HEK293 (cell line): ENCODE measurements at regions of chr1 and their contacts with region 1.

Region 1: GRCh38 chr1:201530741-201531531 is 8.0 kb upstream of the NAV1 start:
- H3K4me3 ChIP-seq: no peak overlapping the region
- H3K27ac ChIP-seq: no peak overlapping the region
- H3K4me1 ChIP-seq: peaks cover 4% of the 10 kb centered on the region; the same call in 1 of the 2 replicates
- CTCF ChIP-seq: peak; percentile 87

Region 2: DNA sequence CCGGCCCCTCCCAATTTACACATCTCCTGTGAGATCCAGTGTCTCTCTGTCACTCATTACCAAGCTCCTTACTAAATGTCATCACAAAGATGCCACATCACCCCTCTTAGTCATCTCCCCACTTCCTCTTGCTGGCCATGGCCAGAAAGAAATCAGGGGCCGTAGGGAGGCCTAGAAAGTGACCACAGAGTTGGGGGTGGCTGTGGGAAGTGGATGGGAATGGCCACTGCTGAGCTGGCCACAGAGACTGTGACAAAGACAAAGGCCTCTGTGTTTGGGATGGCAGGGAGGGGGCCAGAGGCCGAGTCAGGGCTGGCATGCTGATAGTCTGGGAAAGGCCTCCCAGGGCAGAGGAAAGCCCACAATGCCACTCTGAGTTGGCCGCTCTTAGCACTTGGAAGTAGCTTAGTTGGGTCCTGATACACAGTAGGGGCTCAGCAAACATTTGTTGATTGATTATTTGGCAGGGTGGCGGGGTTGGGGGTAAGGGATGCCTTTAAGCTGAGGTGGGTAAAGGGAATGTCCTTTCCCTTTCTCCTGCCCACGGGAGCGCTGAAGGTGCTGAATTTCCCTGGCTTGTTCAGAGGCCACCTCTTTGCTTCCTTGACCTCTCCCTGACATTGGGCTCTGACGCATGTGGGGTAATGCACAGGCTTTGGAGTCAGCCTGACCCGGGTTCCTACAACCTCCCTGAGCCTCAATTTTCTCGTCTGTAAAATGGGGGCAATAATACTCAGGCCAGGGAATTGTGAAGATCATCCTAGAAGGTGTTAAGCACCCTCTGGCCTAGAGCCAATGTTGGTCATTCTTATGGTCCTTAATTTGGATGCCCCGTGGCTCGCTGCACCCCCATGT is 21.2 kb after region 1 on chr1:
- CTCF ChIA-PET with region 1: interaction called, 15 read pairs
- POLR2A ChIA-PET with region 1: no interaction called
- H3K4me3 ChIP-seq: no peak overlapping the region
- H3K27ac ChIP-seq: no peak overlapping the region
- H3K4me1 ChIP-seq: no peaks in the 10 kb centered on the region
- CTCF ChIP-seq: no peak

Region 3: DNA sequence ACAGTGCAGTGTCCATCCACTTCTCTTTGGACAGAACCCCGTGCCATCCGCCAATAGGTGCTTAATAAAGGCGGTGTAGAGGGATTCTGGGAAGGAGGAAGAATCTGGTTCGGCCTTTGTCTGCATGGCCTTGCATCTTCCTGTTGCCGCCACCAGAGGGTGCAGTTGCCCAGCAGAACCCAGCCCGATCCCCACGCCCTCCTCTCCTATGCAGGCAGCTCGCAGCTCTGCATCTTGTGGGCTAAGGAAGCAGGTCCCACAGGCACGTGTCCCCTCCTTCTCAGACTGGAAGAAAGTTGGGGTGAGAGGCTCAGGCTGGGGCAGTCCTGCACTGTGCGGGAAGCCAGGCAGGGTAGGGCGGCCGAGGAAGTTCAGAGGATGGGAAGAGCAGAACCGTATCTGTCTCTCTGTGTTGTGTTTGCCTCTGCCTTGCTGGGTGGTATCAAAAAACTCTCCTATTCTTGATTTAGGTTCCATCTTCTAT is 28.8 kb after region 1 on chr1:
- CTCF ChIA-PET with region 1: interaction called, 51 read pairs
- POLR2A ChIA-PET with region 1: no interaction called
- H3K4me3 ChIP-seq: no peak overlapping the region
- H3K27ac ChIP-seq: no peak overlapping the region
- H3K4me1 ChIP-seq: no peaks in the 10 kb centered on the region
- CTCF ChIP-seq: peak; percentile 99

Region 4: GRCh38 chr1:201582705-201583442 is 51.9 kb after region 1 on chr1:
- CTCF ChIA-PET with region 1: no interaction called
- POLR2A ChIA-PET with region 1: no interaction called
- H3K4me3 ChIP-seq: no peak overlapping the region
- H3K27ac ChIP-seq: no peak overlapping the region
- H3K4me1 ChIP-seq: no peaks in the 10 kb centered on the region
- CTCF ChIP-seq: no peak

Region 5: GRCh38 chr1:201703621-201704439 is 172.9 kb after region 1 on chr1:
- CTCF ChIA-PET with region 1: interaction called, 45 read pairs
- POLR2A ChIA-PET with region 1: no interaction called
- H3K4me3 ChIP-seq: no peak overlapping the region
- H3K27ac ChIP-seq: no peak overlapping the region
- H3K4me1 ChIP-seq: no peaks in the 10 kb centered on the region
- CTCF ChIP-seq: peak; percentile 95